GM12878 (cell line): ENCODE measurements at regions of chr7 and their contacts with region 1.

Region 1: GRCh38 chr7:79272066-79272669 is 181.3 kb downstream of the MAGI2 start:
- DNase-seq: no peak
- ATAC-seq: peak; percentile 70
- H3K4me3 ChIP-seq: no peak overlapping the region
- H3K27ac ChIP-seq: no peak overlapping the region
- H3K4me1 ChIP-seq: no peaks in the 10 kb centered on the region
- H3K27me3 ChIP-seq: no peaks in the 10 kb centered on the region
- CTCF ChIP-seq: peak; percentile 33 to 47 (median 42); a peak in 4 of 6 replicates
- EP300 ChIP-seq: no peak
- POLR2A ChIP-seq: no peak
- RAD21 ChIP-seq: peak; percentile 33; the same call in 1 of the 2 replicates

Region 2: GRCh38 chr7:79241288-79242055 is 30.7 kb before region 1 on chr7:
- CTCF ChIA-PET with region 1: no interaction called
- POLR2A ChIA-PET with region 1: no interaction called
- RAD21 ChIA-PET with region 1: no interaction called
- SMC1A ChIA-PET with region 1: no interaction called
- in situ Hi-C with region 1: no loop called
- intact Hi-C with region 1: no loop called
- DNase-seq: no peak
- ATAC-seq: no peak
- H3K4me3 ChIP-seq: no peak overlapping the region
- H3K27ac ChIP-seq: no peak overlapping the region
- H3K4me1 ChIP-seq: no peaks in the 10 kb centered on the region
- H3K27me3 ChIP-seq: no peaks in the 10 kb centered on the region
- CTCF ChIP-seq: no peak
- EP300 ChIP-seq: no peak
- POLR2A ChIP-seq: no peak
- RAD21 ChIP-seq: no peak

Region 3: GRCh38 chr7:79282063-79282694 is 10.0 kb after region 1 on chr7:
- CTCF ChIA-PET with region 1: interaction called, 10 read pairs
- POLR2A ChIA-PET with region 1: no interaction called
- RAD21 ChIA-PET with region 1: no interaction called
- SMC1A ChIA-PET with region 1: interaction called, 4 read pairs
- in situ Hi-C with region 1: no loop called
- intact Hi-C with region 1: no loop called
- DNase-seq: no peak
- ATAC-seq: no peak
- H3K4me3 ChIP-seq: no peak overlapping the region
- H3K27ac ChIP-seq: no peak overlapping the region
- H3K4me1 ChIP-seq: no peaks in the 10 kb centered on the region
- H3K27me3 ChIP-seq: no peaks in the 10 kb centered on the region; a peak in 1 of 4 replicates
- CTCF ChIP-seq: 0 out of 6 replicates have a peak, but pooled peaks of 1 of the 3 experiments have one; percentile 1
- EP300 ChIP-seq: no peak
- POLR2A ChIP-seq: no peak
- RAD21 ChIP-seq: no peak

Region 4: GRCh38 chr7:79386688-79387422 is 114.7 kb after region 1 on chr7:
- CTCF ChIA-PET with region 1: no interaction called
- POLR2A ChIA-PET with region 1: no interaction called
- RAD21 ChIA-PET with region 1: no interaction called
- SMC1A ChIA-PET with region 1: no interaction called
- in situ Hi-C with region 1: no loop called
- intact Hi-C with region 1: no loop called
- DNase-seq: no peak
- ATAC-seq: no peak
- H3K4me3 ChIP-seq: no peak overlapping the region
- H3K27ac ChIP-seq: no peak overlapping the region
- H3K4me1 ChIP-seq: no peaks in the 10 kb centered on the region
- H3K27me3 ChIP-seq: no peaks in the 10 kb centered on the region
- CTCF ChIP-seq: no peak
- EP300 ChIP-seq: no peak
- POLR2A ChIP-seq: no peak
- RAD21 ChIP-seq: no peak

Region 5: DNA sequence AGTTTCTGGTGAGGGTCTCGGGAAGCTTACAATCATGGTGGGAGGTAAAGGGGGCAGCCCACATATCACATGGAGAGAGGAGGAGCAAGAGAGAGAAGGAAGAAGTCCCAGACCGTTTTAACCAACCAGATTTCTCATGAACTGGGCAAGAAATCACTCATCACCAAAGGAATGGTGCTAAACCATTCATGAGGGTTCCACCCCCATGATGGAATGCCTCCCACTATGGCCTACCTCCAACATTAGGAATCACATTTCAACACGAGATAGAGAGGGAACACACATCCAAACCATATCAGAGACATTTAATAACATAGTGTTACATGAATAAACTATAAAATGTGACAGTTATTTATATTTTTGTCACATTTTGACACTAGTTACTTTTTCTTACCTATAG is 396.1 kb after region 1 on chr7:
- CTCF ChIA-PET with region 1: no interaction called
- POLR2A ChIA-PET with region 1: no interaction called
- RAD21 ChIA-PET with region 1: no interaction called
- SMC1A ChIA-PET with region 1: no interaction called
- in situ Hi-C with region 1: no loop called
- intact Hi-C with region 1: no loop called
- DNase-seq: no peak
- ATAC-seq: no peak
- H3K4me3 ChIP-seq: no peak overlapping the region
- H3K27ac ChIP-seq: no peak overlapping the region
- H3K4me1 ChIP-seq: no peaks in the 10 kb centered on the region
- H3K27me3 ChIP-seq: no peaks in the 10 kb centered on the region
- CTCF ChIP-seq: no peak
- EP300 ChIP-seq: no peak
- POLR2A ChIP-seq: no peak
- RAD21 ChIP-seq: no peak